ENCODE measurements at regions of chr1 and their contacts with region 1.

Region 1: GRCh38 chr1:154751690-154752089 is 118.4 kb downstream of the KCNN3 start:
- DNase-seq: no peak
- H3K4me3 ChIP-seq: no peak overlapping the region
- H3K27ac ChIP-seq: no peak overlapping the region
- H3K4me1 ChIP-seq: peaks cover 0 to 27% (median 19%) of the 10 kb centered on the region in 6 donors
- H3K27me3 ChIP-seq: peaks cover 0 to 37% (median 0%) of the 10 kb centered on the region in 7 donors
- CTCF ChIP-seq: no peak
- POLR2A ChIP-seq: no peak

Region 2: GRCh38 chr1:154851392-154852177 is 99.9 kb after region 1 on chr1:
- intact Hi-C with region 1: no loop called
- DNase-seq: no peak
- H3K4me3 ChIP-seq: no peak overlapping the region
- H3K27ac ChIP-seq: no peak overlapping the region
- H3K4me1 ChIP-seq: peaks cover 0 to 16% (median 5%) of the 10 kb centered on the region in 6 donors
- H3K27me3 ChIP-seq: no peaks in the 10 kb centered on the region
- CTCF ChIP-seq: no peak
- POLR2A ChIP-seq: no peak

Region 3: GRCh38 chr1:154863315-154864174 is 111.9 kb after region 1 on chr1:
- intact Hi-C with region 1: loop called (anchors 10 kb)
- DNase-seq: no peak
- H3K4me3 ChIP-seq: no peak overlapping the region
- H3K27ac ChIP-seq: no peak overlapping the region
- H3K4me1 ChIP-seq: peaks cover 0 to 61% (median 44%) of the 10 kb centered on the region in 6 donors
- H3K27me3 ChIP-seq: peaks cover 0 to 38% (median 10%) of the 10 kb centered on the region in 7 donors
- CTCF ChIP-seq: peak; percentile 20 to 82 (median 72)
- POLR2A ChIP-seq: no peak

Region 4: GRCh38 chr1:155236441-155236840 is 484.8 kb after region 1 on chr1:
- intact Hi-C with region 1: no loop called
- DNase-seq: no peak
- H3K4me3 ChIP-seq: no peak overlapping the region
- H3K27ac ChIP-seq: peak overlapping the region in 6 of 8 donors; percentile 15 to 61 (median 53)
- H3K4me1 ChIP-seq: peaks cover 3 to 46% (median 20%) of the 10 kb centered on the region in 6 donors
- H3K27me3 ChIP-seq: no peaks in the 10 kb centered on the region
- CTCF ChIP-seq: no peak
- POLR2A ChIP-seq: no peak